ENCODE measurements at regions of chr1 and their contacts with region 1.

Region 1: GRCh38 chr1:157487096-157487495 is 65.2 kb downstream of the FCRL5 start:
- DNase-seq: no peak
- H3K4me3 ChIP-seq: no peak overlapping the region
- H3K27ac ChIP-seq: no peak overlapping the region
- H3K4me1 ChIP-seq: no peaks in the 10 kb centered on the region
- H3K27me3 ChIP-seq: peaks cover 0 to 6% (median 0%) of the 10 kb centered on the region in 3 donors
- CTCF ChIP-seq: no peak
- EP300 ChIP-seq: no peak
- POLR2A ChIP-seq: no peak

Region 2: GRCh38 chr1:157199421-157199755 is 287.7 kb before region 1 on chr1:
- intact Hi-C with region 1: loop called (anchors 5 kb)
- DNase-seq: peak in 1 of 2 donors; percentile 36
- H3K4me3 ChIP-seq: no peak overlapping the region
- H3K27ac ChIP-seq: no peak overlapping the region
- H3K4me1 ChIP-seq: peaks cover 0 to 18% (median 6%) of the 10 kb centered on the region in 4 donors
- H3K27me3 ChIP-seq: peaks cover 0 to 17% (median 15%) of the 10 kb centered on the region in 3 donors
- CTCF ChIP-seq: no peak
- EP300 ChIP-seq: no peak
- POLR2A ChIP-seq: no peak

Region 3: DNA sequence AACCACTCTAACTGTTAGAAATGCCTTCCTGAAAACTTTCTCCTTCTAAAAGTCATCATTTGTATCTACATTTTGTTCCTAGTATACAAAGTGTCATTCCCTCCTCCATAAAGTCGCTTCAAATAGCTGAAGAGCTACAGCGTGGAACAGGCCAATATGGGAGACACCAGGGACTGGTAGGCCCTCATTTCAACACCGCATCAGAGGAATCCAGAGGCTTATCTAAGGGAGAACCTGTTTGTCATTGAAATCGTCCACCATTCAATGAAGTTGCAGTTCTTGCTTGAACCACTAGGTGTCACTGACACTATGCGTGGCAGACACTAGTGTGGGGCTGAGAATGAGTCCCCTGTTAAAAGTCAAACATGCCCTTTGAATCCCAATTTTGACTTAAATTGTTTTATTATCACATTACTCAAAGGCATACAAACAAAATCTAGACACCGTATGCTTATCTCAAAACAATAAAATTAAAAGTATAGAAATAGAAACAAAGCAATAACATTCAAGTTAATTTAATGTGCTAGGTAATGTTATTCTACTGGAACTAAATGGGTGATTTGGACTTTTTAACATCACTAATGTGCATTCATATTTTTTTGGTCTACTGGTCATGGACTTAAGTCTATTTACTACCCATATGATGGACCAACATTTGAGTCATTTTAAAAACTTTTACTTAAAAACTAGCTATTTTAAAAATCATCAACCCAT is 117.1 kb before region 1 on chr1:
- intact Hi-C with region 1: loop called (anchors 10 kb)
- DNase-seq: peak; percentile 39 to 75
- H3K4me3 ChIP-seq: no peak overlapping the region
- H3K27ac ChIP-seq: no peak overlapping the region
- H3K4me1 ChIP-seq: no peaks in the 10 kb centered on the region
- H3K27me3 ChIP-seq: no peaks in the 10 kb centered on the region
- CTCF ChIP-seq: peak in 5 of 7 experiments; percentile 73 to 91 (median 87)
- EP300 ChIP-seq: no peak
- POLR2A ChIP-seq: no peak

Measured in stomach (tissue), 19 donors.